ENCODE measurements at regions of chr4 and their contacts with region 1.

Region 1: GRCh38 chr4:8340781-8341241 is 71.3 kb downstream of the HTRA3 start:
- DNase-seq: no peak
- H3K4me3 ChIP-seq: no peak overlapping the region
- H3K27ac ChIP-seq: no peak overlapping the region
- H3K4me1 ChIP-seq: peaks cover 8% of the 10 kb centered on the region
- H3K27me3 ChIP-seq: no peaks in the 10 kb centered on the region
- CTCF ChIP-seq: no peak

Region 2: DNA sequence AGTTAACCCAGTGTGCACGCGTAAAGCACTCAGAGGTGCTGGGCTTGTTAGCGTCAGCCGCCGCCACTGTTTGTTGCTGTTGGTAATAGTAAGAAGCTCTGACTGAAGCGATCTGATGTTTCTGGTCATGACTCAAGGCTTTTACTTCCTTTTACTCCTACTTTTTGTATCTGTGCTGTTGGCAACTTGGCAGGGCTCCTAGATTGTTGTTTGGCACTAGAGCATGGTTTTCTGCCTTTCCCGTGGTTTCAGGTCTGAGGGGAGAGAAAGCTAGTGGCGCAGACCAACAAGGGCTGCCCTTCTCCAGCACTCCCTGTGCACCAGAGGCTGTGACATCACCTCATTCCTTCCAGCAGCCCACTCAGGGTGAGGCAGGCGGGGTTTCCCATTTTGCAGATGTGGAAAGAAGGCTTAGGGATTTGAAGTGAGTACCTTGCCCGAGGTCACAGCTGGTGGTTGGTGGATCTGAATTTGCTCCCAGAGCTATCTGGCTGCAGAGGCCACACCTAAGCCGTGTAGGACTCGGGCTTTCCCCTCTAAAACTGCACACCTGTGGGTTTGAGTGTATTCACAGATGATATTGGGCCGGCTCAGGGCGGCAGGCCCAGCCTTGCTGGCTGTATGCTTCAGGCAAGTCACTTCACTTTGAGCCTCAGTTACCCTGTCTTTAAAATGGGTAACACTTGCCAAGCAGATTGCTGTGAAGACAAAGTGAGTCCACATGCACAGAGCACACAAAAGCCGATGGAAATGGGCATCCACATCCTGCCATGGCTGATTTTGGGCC is 1348.8 kb before region 1 on chr4:
- CTCF ChIA-PET with region 1: no interaction called
- POLR2A ChIA-PET with region 1: no interaction called
- intact Hi-C with region 1: no loop called
- DNase-seq: peak; percentile 46 to 48
- H3K4me3 ChIP-seq: no peak overlapping the region
- H3K27ac ChIP-seq: no peak overlapping the region; the same call in 1 of the 2 replicates
- H3K4me1 ChIP-seq: peaks cover 16% of the 10 kb centered on the region
- H3K27me3 ChIP-seq: no peaks in the 10 kb centered on the region
- CTCF ChIP-seq: no peak

Region 3: DNA sequence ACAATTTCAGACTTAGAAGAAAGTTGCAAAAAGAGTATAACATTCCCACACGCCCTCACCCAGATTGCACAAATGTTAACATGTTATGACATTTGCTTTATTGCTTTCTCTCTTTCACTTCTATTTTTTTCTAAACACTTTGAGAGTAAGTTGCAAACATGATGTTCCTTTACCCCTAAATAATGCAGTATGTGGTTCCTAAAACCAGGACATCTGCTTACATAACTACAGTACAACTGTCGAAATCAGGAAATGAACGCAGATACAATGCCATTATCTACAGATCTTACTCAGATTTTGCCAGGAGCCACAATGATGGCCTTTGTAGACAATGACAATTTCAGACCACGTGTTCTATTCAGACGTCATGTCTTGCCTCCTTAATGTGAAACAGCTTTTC is 119.3 kb before region 1 on chr4:
- CTCF ChIA-PET with region 1: no interaction called
- POLR2A ChIA-PET with region 1: no interaction called
- intact Hi-C with region 1: no loop called
- DNase-seq: peak in 1 of 2 experiments; percentile 53
- H3K4me3 ChIP-seq: no peak overlapping the region
- H3K27ac ChIP-seq: no peak overlapping the region
- H3K4me1 ChIP-seq: peaks cover 9% of the 10 kb centered on the region; the same call in 1 of the 2 replicates
- H3K27me3 ChIP-seq: no peaks in the 10 kb centered on the region
- CTCF ChIP-seq: no peak

Region 4: DNA sequence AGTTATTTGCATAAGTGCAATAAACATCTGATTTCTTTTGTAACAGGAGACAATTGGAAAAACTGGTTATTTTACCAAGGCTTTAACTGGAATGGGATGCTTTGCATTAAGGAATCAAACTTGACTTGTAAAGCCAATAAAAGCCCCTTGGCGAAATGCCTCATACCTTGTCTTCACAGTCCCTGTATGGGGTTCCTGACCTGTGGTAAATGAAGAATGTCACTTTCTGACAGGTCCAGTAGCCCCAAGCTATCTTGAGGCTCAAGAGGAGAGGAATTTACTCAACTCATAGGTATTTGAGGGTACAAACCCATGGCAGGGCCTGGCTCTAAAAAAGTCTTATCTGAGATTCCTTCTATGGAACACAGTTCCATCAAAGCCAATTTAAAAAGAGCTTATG is 21.7 kb after region 1 on chr4:
- CTCF ChIA-PET with region 1: no interaction called
- POLR2A ChIA-PET with region 1: interaction called, 19 read pairs
- intact Hi-C with region 1: no loop called
- DNase-seq: peak; percentile 61 to 95
- H3K4me3 ChIP-seq: no peak overlapping the region
- H3K27ac ChIP-seq: peak overlapping the region; percentile 47
- H3K4me1 ChIP-seq: peaks cover 36% of the 10 kb centered on the region
- H3K27me3 ChIP-seq: no peaks in the 10 kb centered on the region
- CTCF ChIP-seq: no peak

Region 5: DNA sequence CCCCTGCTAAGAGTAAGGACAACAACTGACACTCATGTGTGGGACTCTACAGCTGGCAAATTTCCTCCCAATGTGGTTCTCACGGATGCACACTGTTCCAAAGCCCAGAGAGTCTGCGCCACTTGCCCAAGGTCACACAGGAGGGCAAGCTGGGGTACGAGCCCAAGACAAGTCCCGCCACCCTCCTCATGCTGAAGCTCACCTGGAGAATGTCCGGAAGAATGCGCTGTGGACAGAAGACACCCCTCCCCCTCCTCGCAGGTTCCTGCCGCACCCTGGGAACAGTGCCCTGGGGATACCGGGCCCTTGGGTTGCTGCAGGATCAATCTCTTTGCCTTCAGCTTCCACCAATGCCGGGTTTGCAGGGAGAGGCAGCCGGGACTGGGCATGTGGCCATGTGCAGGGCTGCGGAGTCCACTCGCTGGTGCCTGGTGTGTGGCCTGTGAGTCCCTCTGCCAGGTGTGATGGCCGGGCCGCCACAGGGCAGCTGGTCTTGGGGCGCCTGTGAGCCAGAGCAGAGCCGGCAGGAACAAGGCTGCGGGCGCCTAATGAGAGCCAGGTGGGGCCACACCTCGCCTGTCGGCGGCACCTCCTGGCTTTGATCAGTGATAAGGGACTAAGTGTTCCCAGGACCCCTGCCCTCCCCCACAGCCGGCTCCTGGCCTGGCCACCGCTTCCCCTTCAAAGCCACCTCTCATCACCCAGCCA is 384.2 kb after region 1 on chr4:
- CTCF ChIA-PET with region 1: no interaction called
- POLR2A ChIA-PET with region 1: no interaction called
- intact Hi-C with region 1: no loop called
- DNase-seq: no peak
- H3K4me3 ChIP-seq: no peak overlapping the region
- H3K27ac ChIP-seq: no peak overlapping the region
- H3K4me1 ChIP-seq: no peaks in the 10 kb centered on the region
- H3K27me3 ChIP-seq: peaks cover 75% of the 10 kb centered on the region
- CTCF ChIP-seq: no peak

Measured in PC-9 (cell line).